Calu3 (cell line): ENCODE measurements at regions of chrX and their contacts with region 1.

Region 1: DNA sequence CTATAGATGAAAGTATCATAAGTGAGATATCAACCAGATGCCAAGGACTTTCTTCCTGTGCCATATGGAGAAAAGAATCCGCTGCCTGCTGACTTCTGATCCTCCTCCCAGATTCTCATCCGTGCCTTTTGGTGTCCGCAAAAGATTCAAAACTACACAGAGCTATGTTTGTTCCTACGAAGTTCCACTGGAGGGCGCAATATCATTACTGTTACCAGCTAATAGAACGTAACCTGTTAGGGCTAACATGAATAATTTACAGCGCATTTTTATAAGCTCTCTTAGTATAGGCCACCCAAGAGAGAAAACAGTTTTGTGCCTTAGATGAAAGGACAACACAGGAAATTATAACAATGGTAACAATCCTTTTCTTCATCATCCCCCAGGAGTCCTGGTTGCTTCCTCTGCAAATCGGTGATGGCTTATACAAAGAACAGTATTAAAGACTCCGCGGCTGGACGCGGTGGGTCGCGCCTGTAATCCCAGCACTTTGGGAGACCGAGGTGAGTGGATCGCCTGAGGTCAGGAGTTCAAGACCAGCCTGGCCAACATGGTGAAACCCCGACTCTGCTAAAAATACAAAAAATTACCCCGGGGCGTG is 22.8 kb upstream of the CENPVL3 start:
- DNase-seq: peak; percentile 41
- H3K4me3 Mint-ChIP-seq: no peak overlapping the region
- H3K27ac Mint-ChIP-seq: no peak overlapping the region
- H3K4me1 Mint-ChIP-seq: no peaks in the 10 kb centered on the region
- H3K27me3 Mint-ChIP-seq: no peaks in the 10 kb centered on the region
- CTCF ChIP-seq: peak; percentile 53

Region 2: DNA sequence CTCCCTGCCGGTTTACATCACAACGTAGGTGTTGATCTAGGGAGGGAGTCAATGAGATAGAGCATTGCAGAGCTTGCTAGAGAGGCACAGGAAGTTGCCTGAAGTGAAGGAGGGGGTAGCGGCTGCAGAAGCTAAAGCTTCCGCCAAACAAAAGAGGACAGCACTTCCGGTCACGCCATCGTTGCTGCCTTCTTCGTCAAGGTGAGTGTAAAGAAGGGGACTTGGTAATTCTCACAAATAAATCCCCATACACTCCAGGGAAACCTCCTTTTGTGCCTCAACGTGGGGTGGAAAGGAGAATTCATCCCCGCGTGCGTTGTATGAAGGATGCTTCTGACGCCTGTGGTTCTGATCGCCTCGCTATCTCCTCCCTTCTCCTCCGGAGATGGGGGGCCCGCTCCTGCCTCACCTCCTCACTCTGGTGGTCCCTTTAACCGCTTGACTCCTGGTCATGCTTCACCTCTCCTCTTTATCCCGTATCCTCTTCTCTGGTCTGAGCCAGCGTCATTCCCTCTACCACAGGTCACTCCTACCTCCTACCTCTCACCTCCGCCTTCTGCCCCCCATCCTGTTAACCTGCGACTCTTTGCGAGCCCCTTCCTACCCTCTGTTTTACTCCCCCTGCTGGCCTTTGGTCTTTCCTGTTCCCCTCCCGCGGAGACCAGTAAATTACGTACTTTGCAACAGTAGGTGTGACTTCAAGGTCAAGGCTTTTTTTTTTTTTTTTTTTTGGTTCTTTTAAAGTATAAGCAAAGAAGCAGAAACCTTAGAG is 161.6 kb after region 1 on chrX:
- CTCF ChIA-PET with region 1: interaction called, 9 read pairs
- intact Hi-C with region 1: loop called (anchors 1 kb)
- DNase-seq: peak; percentile 66
- H3K4me3 Mint-ChIP-seq: peak overlapping the region; percentile 91
- H3K27ac Mint-ChIP-seq: peak overlapping the region; percentile 96
- H3K4me1 Mint-ChIP-seq: peaks cover 9% of the 10 kb centered on the region
- H3K27me3 Mint-ChIP-seq: no peaks in the 10 kb centered on the region
- CTCF ChIP-seq: peak; percentile 33

Region 3: GRCh38 chrX:51860679-51861078 is 219.2 kb after region 1 on chrX:
- CTCF ChIA-PET with region 1: interaction called, 7 read pairs
- intact Hi-C with region 1: loop called (anchors 1 kb)
- DNase-seq: peak; percentile 6
- H3K4me3 Mint-ChIP-seq: no peak overlapping the region
- H3K27ac Mint-ChIP-seq: no peak overlapping the region
- H3K4me1 Mint-ChIP-seq: no peaks in the 10 kb centered on the region
- H3K27me3 Mint-ChIP-seq: no peaks in the 10 kb centered on the region
- CTCF ChIP-seq: no peak